MCF 10A (cell line): ENCODE measurements at regions of chr2 and their contacts with region 1.

Region 1: GRCh38 chr2:177909962-177910361 is 162.6 kb downstream of the PDE11A start:
- DNase-seq: peak; percentile 84
- H3K4me3 Mint-ChIP-seq: no peak overlapping the region
- H3K27ac Mint-ChIP-seq: no peak overlapping the region
- H3K4me1 Mint-ChIP-seq: peaks cover 11% of the 10 kb centered on the region
- H3K27me3 Mint-ChIP-seq: no peaks in the 10 kb centered on the region
- CTCF ChIP-seq: no peak

Region 2: GRCh38 chr2:177799531-177799930 is 110.4 kb before region 1 on chr2:
- CTCF ChIA-PET with region 1: interaction called, 4 read pairs
- POLR2A ChIA-PET with region 1: no interaction called
- intact Hi-C with region 1: loop called (anchors 1 kb)
- DNase-seq: peak; percentile 54
- H3K4me3 Mint-ChIP-seq: no peak overlapping the region
- H3K27ac Mint-ChIP-seq: no peak overlapping the region
- H3K4me1 Mint-ChIP-seq: no peaks in the 10 kb centered on the region
- H3K27me3 Mint-ChIP-seq: peaks cover 43% of the 10 kb centered on the region
- CTCF ChIP-seq: peak; percentile 62